Common myeloid progenitor, CD34-positive (primary cell): ENCODE measurements at regions of chr14 and their contacts with region 1.

Region 1: GRCh38 chr14:24215495-24216344 is at the start of gene MDP1:
- DNase-seq: peak; percentile 94 to 97 (median 96)
- H3K4me3 ChIP-seq: peak within 1 kb of the TSS; percentile 53 to 99 (median 99)
- H3K27ac ChIP-seq: peak within 1 kb of the TSS; percentile 54 to 84
- H3K4me1 ChIP-seq: peaks cover 7 to 33% (median 26%) of the 10 kb centered on the region in 4 experiments
- H3K27me3 ChIP-seq: no peaks in the 10 kb centered on the region

Region 2: GRCh38 chr14:23942387-23942986 is 273.2 kb before region 1 on chr14:
- CTCF ChIA-PET with region 1: no interaction called
- POLR2A ChIA-PET with region 1: no interaction called
- DNase-seq: no peak
- H3K4me3 ChIP-seq: no peak overlapping the region
- H3K27ac ChIP-seq: no peak overlapping the region
- H3K4me1 ChIP-seq: no peaks in the 10 kb centered on the region
- H3K27me3 ChIP-seq: no peaks in the 10 kb centered on the region

Region 3: DNA sequence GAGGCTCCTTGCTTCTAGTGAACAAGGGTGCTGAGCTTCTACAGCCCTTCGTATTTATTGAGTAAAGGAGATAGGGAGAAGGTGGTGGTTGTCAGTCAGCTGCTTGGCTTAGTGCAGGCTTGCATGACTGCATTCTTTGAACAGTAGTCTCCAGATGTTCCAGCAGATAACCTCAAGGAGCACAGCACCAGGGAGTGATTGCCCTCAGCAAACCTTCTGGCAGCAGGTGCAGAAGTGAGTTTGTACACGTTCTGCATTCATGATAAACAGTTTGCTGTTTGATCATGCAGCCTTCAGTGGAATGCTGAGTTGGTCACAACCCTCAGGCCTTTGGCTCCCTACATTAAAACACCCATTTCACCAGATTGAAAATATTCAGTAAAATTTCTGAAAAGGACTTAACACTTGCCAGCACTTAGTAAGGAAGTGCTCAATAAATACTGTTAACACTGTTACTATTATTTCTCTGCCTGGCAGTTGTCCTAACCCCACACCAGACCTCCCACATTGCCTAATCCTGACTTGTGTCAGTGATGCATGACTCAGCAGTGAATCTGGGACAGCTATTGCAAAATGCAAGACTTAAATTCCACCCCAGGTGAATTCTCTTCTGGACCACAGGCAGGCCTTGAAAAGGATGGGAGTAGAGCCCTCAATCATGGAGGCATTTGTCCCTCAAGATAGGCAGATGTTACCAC is 182.8 kb before region 1 on chr14:
- CTCF ChIA-PET with region 1: no interaction called
- POLR2A ChIA-PET with region 1: no interaction called
- DNase-seq: peak in 2 of 3 donors; percentile 40 to 50
- H3K4me3 ChIP-seq: no peak overlapping the region
- H3K27ac ChIP-seq: no peak overlapping the region
- H3K4me1 ChIP-seq: peaks cover 0 to 15% (median 7%) of the 10 kb centered on the region in 4 experiments
- H3K27me3 ChIP-seq: no peaks in the 10 kb centered on the region

Region 4: GRCh38 chr14:24195191-24196070 is 20.3 kb before region 1 on chr14 and contains the start of gene TM9SF1:
- CTCF ChIA-PET with region 1: interaction called, 6 read pairs
- POLR2A ChIA-PET with region 1: interaction called, 25 read pairs
- DNase-seq: peak; percentile 93 to 96 (median 95)
- H3K4me3 ChIP-seq: peak within 1 kb of the TSS; percentile 77 to 96 (median 84)
- H3K27ac ChIP-seq: peak within 1 kb of the TSS; percentile 90 to 97
- H3K4me1 ChIP-seq: peaks cover 4 to 32% (median 25%) of the 10 kb centered on the region in 4 experiments
- H3K27me3 ChIP-seq: no peaks in the 10 kb centered on the region

Region 5: GRCh38 chr14:24232121-24232644 is 16.5 kb after region 1 on chr14 and contains the start of gene NEDD8:
- CTCF ChIA-PET with region 1: interaction called, 31 read pairs
- POLR2A ChIA-PET with region 1: interaction called, 3 read pairs
- DNase-seq: peak; percentile 90 to 96 (median 95)
- H3K4me3 ChIP-seq: peak within 1 kb of the TSS; percentile 55 to 96 (median 90)
- H3K27ac ChIP-seq: peak within 1 kb of the TSS; percentile 61 to 87
- H3K4me1 ChIP-seq: peaks cover 11 to 37% (median 29%) of the 10 kb centered on the region in 4 experiments
- H3K27me3 ChIP-seq: no peaks in the 10 kb centered on the region